ENCODE measurements at regions of chr10 and their contacts with region 1.

Region 1: DNA sequence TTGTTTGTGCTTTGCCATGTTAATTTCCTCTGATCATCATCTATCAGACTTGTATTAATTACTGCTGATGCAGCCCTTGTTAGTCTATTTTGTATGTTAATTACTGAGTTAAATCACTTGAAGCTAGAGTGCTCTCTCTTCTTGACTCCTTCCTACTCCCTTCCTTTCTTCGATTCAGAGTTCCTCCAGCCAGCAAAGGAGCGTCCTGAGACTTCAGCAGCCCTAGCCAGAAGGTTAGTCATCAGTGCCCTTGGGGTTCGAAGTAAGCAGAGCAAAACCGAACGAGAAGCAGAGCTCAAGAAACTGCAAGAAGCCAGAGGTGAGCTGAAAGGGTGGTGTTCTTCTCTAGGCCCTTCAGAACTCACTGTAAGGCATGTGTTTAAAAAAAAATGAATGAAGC is 32.1 kb downstream of the LOXL4 start:
- DNase-seq: peak in 1 of 4 experiments; percentile 27
- ATAC-seq: peak; percentile 68
- H3K4me3 ChIP-seq: no peak overlapping the region
- H3K27ac ChIP-seq: peak overlapping the region; percentile 68
- H3K4me1 ChIP-seq: peaks cover 0 to 36% of the 10 kb centered on the region in 2 experiments; a peak in 3 of 5 replicates
- H3K27me3 ChIP-seq: no peaks in the 10 kb centered on the region
- CTCF ChIP-seq: no peak
- EP300 ChIP-seq: no peak
- POLR2A ChIP-seq: no peak
- RAD21 ChIP-seq: no peak

Region 2: GRCh38 chr10:98170249-98171117 is 65.4 kb before region 1 on chr10:
- CTCF ChIA-PET with region 1: no interaction called
- POLR2A ChIA-PET with region 1: interaction called, 3 read pairs
- in situ Hi-C with region 1: no loop called
- intact Hi-C with region 1: loop called (anchors 5 kb)
- DNase-seq: peak; percentile 35 to 65 (median 46)
- ATAC-seq: peak; percentile 90
- H3K4me3 ChIP-seq: no peak overlapping the region
- H3K27ac ChIP-seq: no peak overlapping the region
- H3K4me1 ChIP-seq: peaks cover 0 to 2% of the 10 kb centered on the region in 2 experiments; a peak in 2 of 5 replicates
- H3K27me3 ChIP-seq: no peaks in the 10 kb centered on the region
- CTCF ChIP-seq: peak; percentile 58 to 66 (median 65)
- EP300 ChIP-seq: no peak
- POLR2A ChIP-seq: no peak
- RAD21 ChIP-seq: peak; percentile 63 to 77

Measured in K562 (cell line).